Activated T-helper 1 cell treated with anti-CD3 and anti-CD28 coated beads, Interleukin-12 subunit alpha, Interleukin-12 subunit beta, Interleukin-2, Interleukin-4 antibody, amounts not matched to agents 30 ng/mL and 10 ng/mL and 1 ng/mL, durations not matched to agents 14 hours and 24 hours and 36 hours (primary cell): ENCODE measurements at regions of chr5 and their contacts with region 1.

Region 1: DNA sequence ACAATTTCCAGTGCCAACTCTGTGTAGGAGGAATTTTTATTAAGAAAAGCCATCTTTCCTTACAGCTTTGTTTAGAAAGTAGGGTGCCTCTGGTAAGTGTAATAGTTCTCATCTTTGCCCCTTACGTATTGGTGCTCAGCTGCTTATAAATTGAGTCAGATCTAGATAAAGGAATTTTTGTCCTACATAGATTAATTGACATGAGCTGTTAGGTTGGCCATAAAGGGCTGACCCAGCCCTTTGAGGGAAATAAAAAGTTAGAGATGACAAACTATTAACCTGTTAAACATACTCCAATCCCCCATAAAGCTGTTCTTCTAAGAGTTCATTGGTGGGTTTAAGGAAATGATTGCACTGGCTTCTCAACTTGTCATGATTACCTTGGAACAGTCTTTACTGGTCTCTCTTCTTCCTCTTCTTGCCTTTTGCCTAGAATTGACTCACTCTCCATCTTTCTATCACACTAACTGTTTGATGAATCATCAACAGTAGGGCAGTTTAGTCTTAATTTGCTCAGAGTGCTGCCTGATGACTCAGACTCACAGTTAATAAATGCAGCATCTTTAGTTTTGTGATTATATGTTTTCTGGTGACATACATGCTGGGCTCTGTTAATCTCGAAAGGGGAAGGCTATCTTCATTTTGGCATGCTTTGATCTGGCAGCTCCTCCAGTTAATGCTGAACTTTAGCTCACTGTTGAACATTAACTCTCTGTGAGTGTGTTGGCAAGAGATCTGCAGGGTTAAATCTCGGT is 51.7 kb downstream of the ARHGAP26 start:
- DNase-seq: no peak
- H3K4me3 Mint-ChIP-seq: no peak overlapping the region
- H3K27ac Mint-ChIP-seq: peak overlapping the region; percentile 16
- H3K4me1 Mint-ChIP-seq: peaks cover 79% of the 10 kb centered on the region
- H3K27me3 Mint-ChIP-seq: no peaks in the 10 kb centered on the region

Region 2: GRCh38 chr5:142095651-142096330 is 726.1 kb before region 1 on chr5:
- intact Hi-C with region 1: loop called (anchors 10 kb)
- DNase-seq: peak; percentile 63
- H3K4me3 Mint-ChIP-seq: peak overlapping the region; percentile 16
- H3K27ac Mint-ChIP-seq: peak overlapping the region; percentile 94
- H3K4me1 Mint-ChIP-seq: peaks cover 51% of the 10 kb centered on the region
- H3K27me3 Mint-ChIP-seq: no peaks in the 10 kb centered on the region

Region 3: GRCh38 chr5:142783601-142784341 is 38.1 kb before region 1 on chr5:
- intact Hi-C with region 1: loop called (anchors 1 kb)
- DNase-seq: peak; percentile 57
- H3K4me3 Mint-ChIP-seq: peak overlapping the region; percentile 32
- H3K27ac Mint-ChIP-seq: peak overlapping the region; percentile 62
- H3K4me1 Mint-ChIP-seq: peaks cover 63% of the 10 kb centered on the region
- H3K27me3 Mint-ChIP-seq: no peaks in the 10 kb centered on the region

Region 4: DNA sequence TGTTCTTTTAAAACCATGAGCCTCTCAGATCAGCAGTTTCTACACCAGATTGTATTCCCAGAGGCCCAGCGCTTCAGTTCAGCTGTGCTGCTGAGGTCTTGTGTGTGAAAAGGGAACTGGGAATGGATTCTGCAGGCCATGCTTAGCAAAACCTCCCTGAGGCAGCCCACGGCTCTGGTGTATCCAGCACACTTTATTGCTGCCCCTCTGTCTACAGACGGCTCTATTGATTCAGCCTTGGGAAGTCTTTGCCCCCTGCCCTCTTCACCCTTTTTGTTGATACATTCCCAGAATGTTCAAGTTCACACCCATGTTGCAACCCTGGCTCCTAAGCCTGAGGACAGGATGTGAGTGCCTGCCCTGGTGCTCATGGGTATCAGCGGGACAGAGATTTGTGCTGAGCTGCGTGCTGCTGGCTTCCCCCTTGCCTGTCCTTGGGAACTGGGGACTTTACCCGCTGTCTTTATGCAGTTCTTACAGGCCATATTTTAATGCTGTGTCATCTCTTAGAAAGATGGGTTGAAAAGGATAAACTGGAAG is 14.5 kb before region 1 on chr5:
- intact Hi-C with region 1: no loop called
- DNase-seq: no peak
- H3K4me3 Mint-ChIP-seq: no peak overlapping the region
- H3K27ac Mint-ChIP-seq: no peak overlapping the region
- H3K4me1 Mint-ChIP-seq: peaks cover 39% of the 10 kb centered on the region
- H3K27me3 Mint-ChIP-seq: no peaks in the 10 kb centered on the region

Region 5: GRCh38 chr5:142872795-142873194 is 50.9 kb after region 1 on chr5:
- intact Hi-C with region 1: loop called (anchors 1 kb)
- DNase-seq: no peak
- H3K4me3 Mint-ChIP-seq: no peak overlapping the region
- H3K27ac Mint-ChIP-seq: no peak overlapping the region
- H3K4me1 Mint-ChIP-seq: peaks cover 13% of the 10 kb centered on the region
- H3K27me3 Mint-ChIP-seq: peaks cover 3% of the 10 kb centered on the region

Region 6: DNA sequence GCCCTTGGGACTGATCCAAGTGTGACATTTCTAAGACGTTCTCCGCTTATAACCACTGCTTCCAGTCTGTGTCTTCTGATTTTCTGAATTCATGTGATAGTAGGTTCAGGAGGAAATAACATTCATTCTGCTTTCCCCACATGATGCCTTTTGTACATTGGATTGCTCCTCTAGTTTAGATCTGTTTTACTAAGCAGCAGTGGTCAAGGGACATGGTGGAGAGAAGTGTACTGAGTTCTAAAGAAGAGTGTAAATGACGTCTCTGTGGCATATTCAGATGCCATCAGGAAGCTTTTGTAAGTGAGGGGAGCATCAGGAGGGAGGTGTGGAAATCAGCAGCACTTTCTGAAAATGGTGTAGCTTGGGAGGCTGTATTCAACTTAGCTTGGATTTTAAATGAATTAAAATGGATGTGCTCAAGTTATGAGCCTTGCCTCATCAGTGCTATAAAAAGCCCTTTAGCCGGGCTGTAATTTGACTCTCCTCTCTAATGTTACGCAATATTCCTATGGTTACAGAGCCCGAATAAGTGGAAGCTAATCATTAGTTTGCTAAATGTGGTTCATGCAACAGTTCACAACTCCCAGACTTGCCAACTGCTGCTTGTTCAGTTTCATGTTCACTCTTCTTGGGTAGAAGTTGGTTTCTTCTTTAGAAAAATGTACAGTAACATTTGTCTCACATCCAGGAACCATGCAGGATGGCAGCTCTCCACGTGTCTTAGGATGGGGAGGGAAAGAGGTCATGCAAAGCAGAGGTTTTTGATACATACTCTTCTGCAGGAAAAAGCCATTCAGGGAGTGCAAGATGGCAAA is 229.5 kb after region 1 on chr5:
- intact Hi-C with region 1: loop called (anchors 10 kb)
- DNase-seq: no peak
- H3K4me3 Mint-ChIP-seq: no peak overlapping the region
- H3K27ac Mint-ChIP-seq: peak overlapping the region; percentile 68
- H3K4me1 Mint-ChIP-seq: peaks cover 81% of the 10 kb centered on the region
- H3K27me3 Mint-ChIP-seq: no peaks in the 10 kb centered on the region